CD8-positive, alpha-beta T cell (primary cell): ENCODE measurements at regions of chr1 and their contacts with region 1.

Region 1: DNA sequence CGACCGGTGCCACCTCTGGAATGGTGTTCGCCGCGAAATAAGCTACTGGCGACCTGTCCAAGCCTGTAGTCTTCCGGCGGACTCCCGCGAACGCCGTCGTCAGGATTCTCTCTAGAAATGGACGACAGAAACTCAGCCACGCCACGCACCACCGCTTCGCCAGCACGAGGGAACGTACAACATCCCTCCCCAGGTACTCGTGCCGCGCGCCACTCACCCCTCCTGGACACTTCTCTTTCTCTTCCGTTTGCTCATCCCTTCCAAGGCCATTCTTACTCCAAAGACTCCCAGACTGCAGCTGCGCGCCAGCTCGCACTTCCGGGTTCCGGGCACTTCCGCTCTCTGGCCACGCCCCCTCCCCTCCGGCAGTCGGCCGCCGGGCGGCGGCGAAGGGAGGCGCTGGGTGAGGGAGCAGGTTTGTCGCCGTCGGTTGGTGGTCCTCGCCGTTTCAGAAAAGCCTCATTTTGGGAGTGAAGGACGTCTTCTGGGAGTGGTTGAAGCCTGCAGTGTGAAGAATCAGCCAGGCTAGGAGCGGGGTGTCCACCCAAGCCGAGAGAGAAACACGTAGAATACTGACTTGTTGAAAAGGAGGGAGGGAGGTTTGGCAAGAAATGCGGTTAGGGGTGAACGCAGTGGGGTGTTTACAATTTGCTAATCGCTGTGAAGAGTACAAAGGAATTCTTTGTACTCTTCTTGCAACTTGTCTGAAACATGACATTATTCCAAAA is at the start of gene RBM34:
- DNase-seq: peak; percentile 83 to 96 (median 93)
- ATAC-seq: peak; percentile 87
- H3K4me3 ChIP-seq: peak within 1 kb of the TSS; percentile 89 to 91
- H3K4me3 Mint-ChIP-seq: peak within 1 kb of the TSS; percentile 99
- H3K27ac ChIP-seq: peak within 1 kb of the TSS; percentile 91 to 93
- H3K27ac Mint-ChIP-seq: peak within 1 kb of the TSS; percentile 100
- H3K4me1 ChIP-seq: peaks cover 40% of the 10 kb centered on the region
- H3K4me1 Mint-ChIP-seq: peaks cover 18% of the 10 kb centered on the region
- H3K27me3 ChIP-seq: no peaks in the 10 kb centered on the region
- H3K27me3 Mint-ChIP-seq: no peaks in the 10 kb centered on the region
- CTCF ChIP-seq: no peak
- total RNA-seq, gene RBM34: 243 to 267 TPM

Region 2: GRCh38 chr1:235128456-235129328 is 32.4 kb before region 1 on chr1 and contains the start of gene TOMM20:
- CTCF ChIA-PET with region 1: interaction called, 5 read pairs
- POLR2A ChIA-PET with region 1: interaction called, 25 read pairs
- intact Hi-C with region 1: loop called (anchors 1 kb)
- DNase-seq: peak; percentile 88 to 98 (median 91)
- ATAC-seq: peak; percentile 88
- H3K4me3 ChIP-seq: peak within 1 kb of the TSS; percentile 83 to 98
- H3K4me3 Mint-ChIP-seq: peak within 1 kb of the TSS; percentile 88
- H3K27ac ChIP-seq: peak within 1 kb of the TSS; percentile 92 to 95
- H3K27ac Mint-ChIP-seq: peak within 1 kb of the TSS; percentile 93
- H3K4me1 ChIP-seq: peaks cover 36% of the 10 kb centered on the region
- H3K4me1 Mint-ChIP-seq: peaks cover 44% of the 10 kb centered on the region
- H3K27me3 ChIP-seq: no peaks in the 10 kb centered on the region
- H3K27me3 Mint-ChIP-seq: no peaks in the 10 kb centered on the region
- CTCF ChIP-seq: no peak
- total RNA-seq, gene TOMM20: 165 to 166 TPM

Region 3: DNA sequence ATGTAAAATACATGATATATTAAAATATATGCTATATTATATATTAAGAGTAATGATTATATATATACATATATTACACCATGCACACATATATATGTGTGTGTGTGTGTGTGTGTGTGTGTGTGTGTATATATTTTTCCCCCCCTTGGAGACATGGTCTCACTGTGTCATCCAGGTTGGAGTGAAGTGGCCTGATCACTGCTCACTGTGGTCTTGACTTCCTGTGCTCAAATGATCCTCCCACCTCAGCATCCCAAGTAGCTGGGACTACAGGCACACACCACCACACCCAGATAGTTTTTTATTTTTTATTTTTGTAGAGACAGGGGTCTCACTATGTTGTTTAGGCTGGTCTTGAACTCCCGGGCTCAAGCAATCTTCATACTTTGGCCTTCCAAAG is 54.3 kb after region 1 on chr1:
- CTCF ChIA-PET with region 1: no interaction called
- POLR2A ChIA-PET with region 1: no interaction called
- intact Hi-C with region 1: loop called in 1 of 2 experiments (anchors 10 kb)
- DNase-seq: no peak
- ATAC-seq: no peak
- H3K4me3 ChIP-seq: no peak overlapping the region
- H3K4me3 Mint-ChIP-seq: no peak overlapping the region
- H3K27ac ChIP-seq: no peak overlapping the region
- H3K27ac Mint-ChIP-seq: no peak overlapping the region
- H3K4me1 ChIP-seq: peaks cover 3% of the 10 kb centered on the region
- H3K4me1 Mint-ChIP-seq: peaks cover 8% of the 10 kb centered on the region
- H3K27me3 ChIP-seq: no peaks in the 10 kb centered on the region
- H3K27me3 Mint-ChIP-seq: no peaks in the 10 kb centered on the region
- CTCF ChIP-seq: no peak